Activated T-helper 2 cell treated with anti-CD3 and anti-CD28 coated beads, Interferon-gamma antibody, Interleukin-2, Interleukin-4, amounts not matched to agents 10 μg/mL and 5 μg/mL and 100 μg/mL, durations not matched to agents 14 hours and 24 hours and 36 hours (primary cell): ENCODE measurements at regions of chr9 and their contacts with region 1.

Region 1: DNA sequence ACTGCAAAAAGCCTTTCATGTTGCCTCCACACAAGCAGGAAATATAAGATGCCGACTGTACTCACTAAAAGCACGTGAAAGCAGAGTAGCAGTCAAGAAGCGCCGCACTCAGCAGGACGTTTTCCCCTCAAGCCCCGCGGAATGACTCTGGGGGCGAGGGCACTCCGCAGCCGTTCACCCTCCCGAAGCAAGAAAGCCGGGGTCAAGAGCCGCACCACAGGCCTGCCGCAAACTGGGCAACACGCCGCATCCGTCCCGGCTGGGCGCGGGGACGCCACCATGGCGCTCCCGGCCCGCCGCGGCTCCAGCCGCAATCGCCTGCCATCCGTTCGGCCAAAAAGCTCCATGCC is 364 bp downstream of the RPS6 start:
- DNase-seq: no peak
- H3K4me3 Mint-ChIP-seq: peak overlapping the region; percentile 96
- H3K27ac Mint-ChIP-seq: peak overlapping the region; percentile 98
- H3K4me1 Mint-ChIP-seq: peaks cover 38% of the 10 kb centered on the region
- H3K27me3 Mint-ChIP-seq: no peaks in the 10 kb centered on the region

Region 2: DNA sequence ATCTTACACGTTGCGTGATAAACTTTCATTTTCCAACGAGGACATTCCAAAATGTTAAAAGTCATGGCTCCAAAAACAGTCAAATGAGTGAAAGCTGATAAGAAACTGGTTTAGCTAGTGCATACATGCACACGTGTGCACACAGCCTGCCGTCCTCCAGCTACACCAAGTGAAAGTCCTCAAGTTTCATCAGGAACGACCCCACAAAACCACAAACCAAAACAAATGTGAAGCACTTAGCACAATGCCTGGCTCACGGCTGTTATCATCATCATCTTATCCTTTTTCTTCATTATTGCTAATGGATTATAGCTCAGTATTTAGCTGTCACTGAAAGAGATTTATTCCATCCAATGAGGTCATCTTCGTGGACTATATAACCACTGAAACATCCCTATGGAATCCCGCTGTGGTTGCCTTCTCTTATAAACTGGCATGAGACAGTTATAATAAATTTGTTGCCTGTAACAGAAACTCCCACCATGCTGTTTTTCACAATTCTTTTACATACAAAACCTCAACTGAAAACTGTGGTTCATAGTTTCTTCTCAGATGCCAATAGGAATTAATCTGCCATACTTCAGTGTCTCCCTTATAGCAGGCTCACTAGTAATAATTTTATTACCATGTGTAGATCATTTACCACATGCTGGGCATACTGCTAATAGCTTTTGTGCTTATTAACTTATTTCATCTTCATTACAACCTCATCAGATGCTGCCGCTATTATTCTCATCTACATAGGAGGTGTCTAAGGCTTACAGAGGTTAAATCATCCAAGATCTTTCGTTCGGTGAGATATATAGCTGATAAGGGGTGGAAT is 402.8 kb before region 1 on chr9:
- intact Hi-C with region 1: no loop called
- DNase-seq: no peak
- H3K4me3 Mint-ChIP-seq: no peak overlapping the region
- H3K27ac Mint-ChIP-seq: no peak overlapping the region
- H3K4me1 Mint-ChIP-seq: peaks cover 4% of the 10 kb centered on the region
- H3K27me3 Mint-ChIP-seq: peaks cover 15% of the 10 kb centered on the region

Region 3: GRCh38 chr9:19230356-19231125 is 149.1 kb before region 1 on chr9 and contains the start of gene DENND4C:
- intact Hi-C with region 1: loop called (anchors 1 kb)
- DNase-seq: peak; percentile 82
- H3K4me3 Mint-ChIP-seq: peak within 1 kb of the TSS; percentile 76
- H3K27ac Mint-ChIP-seq: peak within 1 kb of the TSS; percentile 69
- H3K4me1 Mint-ChIP-seq: peaks cover 12% of the 10 kb centered on the region
- H3K27me3 Mint-ChIP-seq: no peaks in the 10 kb centered on the region
- total RNA-seq, gene DENND4C: 19.0 and 25.0 TPM in 2 replicates

Region 4: DNA sequence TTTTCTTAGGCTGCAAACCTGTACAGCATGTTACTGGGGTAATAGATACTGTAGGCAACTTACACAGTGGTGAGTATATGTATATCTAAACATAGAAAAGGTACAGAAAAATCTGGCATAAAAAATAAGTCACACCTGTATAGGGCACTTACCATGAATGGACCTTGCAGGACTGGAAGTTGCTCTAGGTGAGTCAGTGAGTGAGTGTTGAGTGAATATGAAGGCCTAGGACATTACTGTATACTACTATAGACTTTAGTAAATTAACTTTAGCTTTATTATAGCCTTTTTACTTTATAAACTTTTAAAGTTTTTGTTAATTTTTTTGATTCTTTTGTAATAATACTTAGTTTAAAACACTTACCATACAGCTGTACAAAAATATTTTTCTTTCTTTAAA is 97.9 kb before region 1 on chr9:
- intact Hi-C with region 1: no loop called
- DNase-seq: no peak
- H3K4me3 Mint-ChIP-seq: no peak overlapping the region
- H3K27ac Mint-ChIP-seq: no peak overlapping the region
- H3K4me1 Mint-ChIP-seq: peaks cover 3% of the 10 kb centered on the region
- H3K27me3 Mint-ChIP-seq: no peaks in the 10 kb centered on the region

Region 5: DNA sequence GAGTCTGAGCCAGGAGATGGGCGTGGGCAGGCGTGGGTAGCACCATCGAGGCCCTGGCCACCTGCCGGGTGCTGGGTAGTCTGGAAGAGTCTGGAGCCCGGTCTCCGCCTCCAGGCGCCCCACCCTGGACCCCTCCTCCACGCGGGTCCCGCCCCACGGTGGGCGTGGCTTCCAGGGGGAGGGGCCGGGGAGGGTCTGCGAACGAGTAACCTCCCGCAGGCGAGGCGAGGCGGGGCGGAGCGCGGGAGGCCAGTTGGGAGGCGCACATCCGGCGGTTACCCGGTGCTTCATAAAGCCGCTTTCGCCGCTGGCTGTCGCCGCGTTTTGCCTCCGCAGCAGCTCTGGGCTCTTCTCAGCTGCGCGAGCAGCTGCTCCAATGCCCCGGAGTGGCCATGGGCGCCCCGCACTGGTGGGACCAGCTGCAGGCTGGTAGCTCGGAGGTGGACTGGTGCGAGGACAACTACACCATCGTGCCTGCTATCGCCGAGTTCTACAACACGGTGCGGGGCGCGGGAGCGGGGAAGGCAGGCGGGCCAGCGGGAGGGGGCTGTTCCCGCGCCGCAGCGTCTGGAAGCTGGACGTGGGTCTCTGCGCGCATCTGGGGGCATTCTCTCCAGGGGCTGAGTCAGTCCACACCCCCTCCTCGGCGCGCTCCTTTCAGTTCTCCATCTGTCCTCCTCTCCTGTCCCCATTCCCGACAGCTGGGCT is 29.2 kb after region 1 on chr9 and contains the start of gene ACER2:
- intact Hi-C with region 1: loop called (anchors 1 kb)
- DNase-seq: peak; percentile 93
- H3K4me3 Mint-ChIP-seq: peak within 1 kb of the TSS; percentile 96
- H3K27ac Mint-ChIP-seq: peak within 1 kb of the TSS; percentile 50
- H3K4me1 Mint-ChIP-seq: peaks cover 14% of the 10 kb centered on the region
- H3K27me3 Mint-ChIP-seq: peaks cover 3% of the 10 kb centered on the region
- total RNA-seq, gene ACER2: 1.0 and 1.3 TPM in 2 replicates